ENCODE measurements at regions of chr4 and their contacts with region 1.

Region 1: GRCh38 chr4:94590493-94590892 is 138.8 kb downstream of the PDLIM5 start:
- DNase-seq: no peak
- H3K4me3 ChIP-seq: no peak overlapping the region
- H3K27ac ChIP-seq: no peak overlapping the region
- H3K4me1 ChIP-seq: peaks cover 6% of the 10 kb centered on the region
- H3K27me3 ChIP-seq: no peaks in the 10 kb centered on the region
- CTCF ChIP-seq: no peak
- EP300 ChIP-seq: no peak
- POLR2A ChIP-seq: no peak

Region 2: DNA sequence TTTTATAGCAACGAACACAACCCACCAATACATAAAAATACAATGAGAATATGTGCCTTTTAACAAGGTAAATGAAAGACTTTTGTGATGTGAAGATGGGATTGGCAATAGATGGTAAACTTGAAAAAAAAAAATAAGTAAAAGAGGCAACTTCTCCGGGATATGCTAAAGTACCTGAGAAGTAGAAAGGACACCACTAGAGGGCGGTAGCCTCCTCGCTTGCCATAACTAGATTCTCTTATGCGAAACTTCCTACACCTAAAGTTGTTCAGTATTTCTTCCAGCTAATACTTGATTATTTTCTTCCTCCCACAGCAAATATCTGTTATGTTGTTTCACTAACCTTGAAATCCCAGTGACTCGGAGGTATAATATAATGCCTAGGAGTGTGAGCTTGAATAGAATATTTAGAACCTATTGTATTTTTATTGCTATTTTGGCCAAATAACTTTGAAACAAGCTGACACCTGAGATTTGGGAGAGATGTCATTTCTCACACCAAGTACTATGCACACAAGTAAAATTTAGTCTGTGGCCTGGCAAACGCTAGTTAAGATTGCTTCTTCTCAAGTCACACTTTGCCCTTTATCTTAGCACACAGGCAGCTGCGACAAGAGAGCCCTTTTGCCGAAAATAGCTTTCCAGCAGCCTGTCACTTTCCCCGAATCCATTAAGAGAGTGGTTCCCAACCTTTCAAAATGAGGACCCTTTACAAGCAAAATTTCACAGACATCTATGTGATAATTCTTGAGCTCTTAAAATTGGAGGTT is 183.6 kb before region 1 on chr4:
- intact Hi-C with region 1: loop called (anchors 5 to 10 kb)
- DNase-seq: peak; percentile 62 to 84 (median 72)
- H3K4me3 ChIP-seq: no peak overlapping the region
- H3K27ac ChIP-seq: no peak overlapping the region
- H3K4me1 ChIP-seq: peaks cover 1% of the 10 kb centered on the region
- H3K27me3 ChIP-seq: no peaks in the 10 kb centered on the region
- CTCF ChIP-seq: peak; percentile 49 to 67 (median 61)
- EP300 ChIP-seq: no peak
- POLR2A ChIP-seq: no peak

Measured in ovary (tissue), 10 donors.